ENCODE measurements at regions of chr5 and their contacts with region 1.

Region 1: GRCh38 chr5:140157032-140157803 is 17.8 kb upstream of the CYSTM1 start:
- DNase-seq: peak; percentile 76
- H3K4me3 Mint-ChIP-seq: peak overlapping the region; percentile 41
- H3K27ac Mint-ChIP-seq: no peak overlapping the region
- H3K4me1 Mint-ChIP-seq: no peaks in the 10 kb centered on the region
- H3K27me3 Mint-ChIP-seq: peaks cover 4% of the 10 kb centered on the region

Region 2: DNA sequence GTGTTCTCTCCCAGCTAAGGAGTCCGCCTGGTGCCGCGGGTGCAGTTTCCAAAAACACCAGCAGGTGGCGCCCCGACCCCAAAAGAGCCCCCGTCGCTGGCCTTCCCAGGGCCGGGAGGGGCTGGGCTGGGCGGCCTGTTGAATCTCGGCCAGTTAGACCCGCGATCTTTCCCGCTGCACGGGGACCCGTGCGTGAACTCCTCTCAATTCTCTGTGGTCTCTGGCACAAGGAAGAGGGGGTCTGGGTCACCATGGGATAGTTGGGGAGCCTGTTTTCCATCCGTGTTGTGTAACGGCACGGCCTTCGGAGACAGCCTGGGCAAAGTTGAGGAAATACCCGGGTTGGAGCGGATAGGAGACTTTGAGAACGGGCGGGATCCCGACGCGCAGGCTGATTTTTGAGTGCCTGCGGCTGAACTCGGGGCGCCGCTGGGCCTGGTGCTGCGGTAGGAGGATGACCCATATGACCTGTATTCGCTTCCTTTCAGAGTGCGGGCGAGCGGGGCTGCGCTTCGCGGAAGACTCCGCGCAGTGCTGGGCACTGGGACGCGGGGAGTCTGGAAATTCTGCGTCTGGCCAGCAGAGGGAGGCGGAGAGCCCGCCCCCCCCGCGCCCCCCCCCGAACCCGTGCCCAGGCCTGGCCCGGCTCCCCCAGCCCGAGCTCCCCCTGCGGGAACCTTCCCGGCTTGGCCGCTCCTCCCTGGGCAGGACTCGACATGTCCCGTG is 369.5 kb before region 1 on chr5:
- intact Hi-C with region 1: loop called (anchors 1 kb)
- DNase-seq: peak; percentile 70
- H3K4me3 Mint-ChIP-seq: peak overlapping the region; percentile 82
- H3K27ac Mint-ChIP-seq: no peak overlapping the region
- H3K4me1 Mint-ChIP-seq: no peaks in the 10 kb centered on the region
- H3K27me3 Mint-ChIP-seq: peaks cover 32% of the 10 kb centered on the region

Region 3: DNA sequence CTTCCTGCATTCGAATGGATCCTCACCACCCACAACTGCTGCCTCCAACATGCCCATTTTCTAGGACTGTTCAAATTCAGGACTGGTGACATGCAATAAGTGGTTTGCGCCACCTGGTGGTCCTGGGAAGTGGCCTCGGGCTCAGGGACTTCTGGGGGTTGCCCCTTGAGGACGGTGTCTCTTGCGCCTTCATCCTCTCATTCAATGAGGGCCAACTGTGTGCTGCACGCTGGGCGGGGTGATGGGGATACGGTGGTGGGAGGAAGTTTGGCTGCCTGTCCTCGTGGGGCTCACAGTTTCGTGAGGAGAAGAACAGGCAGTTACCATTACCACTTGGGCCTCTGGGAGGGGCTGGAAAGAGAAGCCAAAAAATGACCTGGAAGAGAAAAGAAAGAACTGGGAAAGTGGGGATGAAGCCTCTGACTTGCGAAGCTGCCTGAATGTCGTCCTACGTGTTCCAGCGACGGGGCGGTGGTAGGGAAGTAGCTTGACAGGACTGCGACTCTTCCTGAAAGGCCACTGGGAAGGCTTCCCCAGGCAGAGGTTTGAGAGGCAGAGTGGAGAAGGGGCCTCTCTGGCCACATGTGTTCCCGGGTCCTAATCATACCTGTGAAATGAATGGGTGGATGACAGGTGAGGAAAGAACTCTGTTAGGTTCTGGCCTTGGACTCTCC is 312.6 kb before region 1 on chr5:
- intact Hi-C with region 1: loop called (anchors 10 kb)
- DNase-seq: peak; percentile 20
- H3K4me3 Mint-ChIP-seq: no peak overlapping the region
- H3K27ac Mint-ChIP-seq: no peak overlapping the region
- H3K4me1 Mint-ChIP-seq: peaks cover 8% of the 10 kb centered on the region
- H3K27me3 Mint-ChIP-seq: peaks cover 44% of the 10 kb centered on the region

Region 4: DNA sequence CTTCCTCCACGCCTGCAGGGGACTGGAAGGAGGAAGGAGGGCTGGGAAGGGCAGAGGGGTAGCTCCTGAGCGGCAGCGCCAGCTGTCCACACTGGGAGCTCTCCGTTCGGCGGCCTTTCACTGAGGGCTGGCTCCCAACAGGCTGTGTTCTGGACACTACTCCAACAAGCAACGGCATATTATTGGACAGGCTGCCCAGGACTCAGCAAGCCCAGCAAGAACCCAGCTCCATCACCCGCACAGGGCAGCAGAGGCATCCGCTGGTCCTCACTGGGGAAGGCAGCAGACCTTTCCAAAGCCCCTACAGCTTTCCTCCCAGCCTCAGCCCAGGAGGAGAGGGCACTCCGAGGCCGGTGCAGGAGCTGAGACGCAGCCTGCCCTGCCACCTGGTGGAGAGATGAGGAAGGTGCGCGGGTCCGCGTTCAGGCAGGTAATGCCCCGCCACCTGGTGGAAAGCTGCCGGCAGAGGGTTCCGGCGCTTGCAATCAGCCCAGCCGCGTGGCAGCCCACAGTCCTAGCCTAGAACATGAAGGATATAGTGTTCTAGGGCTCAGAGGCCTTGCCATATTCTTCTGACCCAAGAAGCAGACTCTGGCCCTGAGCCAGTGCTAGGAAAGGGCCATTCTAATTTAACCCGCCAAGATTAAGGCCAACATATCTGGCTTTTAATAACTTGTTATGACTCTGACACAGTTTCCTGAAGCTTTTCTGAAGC is 188.5 kb before region 1 on chr5:
- intact Hi-C with region 1: loop called (anchors 1 kb)
- DNase-seq: peak; percentile 77
- H3K4me3 Mint-ChIP-seq: no peak overlapping the region
- H3K27ac Mint-ChIP-seq: no peak overlapping the region
- H3K4me1 Mint-ChIP-seq: no peaks in the 10 kb centered on the region
- H3K27me3 Mint-ChIP-seq: peaks cover 29% of the 10 kb centered on the region

Region 5: DNA sequence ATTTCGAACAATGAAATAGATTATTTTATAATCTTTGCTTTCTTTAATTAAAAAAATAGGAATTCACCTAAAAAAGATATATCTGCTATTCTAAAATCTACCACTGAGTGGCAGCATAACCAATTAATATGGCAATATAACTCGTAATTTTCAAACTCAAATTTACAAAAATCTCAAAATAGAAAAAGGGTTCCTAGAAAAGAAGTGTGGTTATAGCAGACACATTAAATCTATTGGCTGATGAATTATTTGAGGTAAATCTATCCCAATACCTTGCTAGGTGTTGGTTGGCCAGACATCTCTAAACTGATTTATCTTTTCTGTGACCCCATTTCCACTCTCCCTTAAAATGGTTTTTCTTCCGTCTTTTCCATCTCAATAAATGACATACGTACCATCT is 83.9 kb before region 1 on chr5:
- intact Hi-C with region 1: loop called (anchors 1 kb)
- DNase-seq: no peak
- H3K4me3 Mint-ChIP-seq: no peak overlapping the region
- H3K27ac Mint-ChIP-seq: no peak overlapping the region
- H3K4me1 Mint-ChIP-seq: no peaks in the 10 kb centered on the region
- H3K27me3 Mint-ChIP-seq: peaks cover 22% of the 10 kb centered on the region

Region 6: DNA sequence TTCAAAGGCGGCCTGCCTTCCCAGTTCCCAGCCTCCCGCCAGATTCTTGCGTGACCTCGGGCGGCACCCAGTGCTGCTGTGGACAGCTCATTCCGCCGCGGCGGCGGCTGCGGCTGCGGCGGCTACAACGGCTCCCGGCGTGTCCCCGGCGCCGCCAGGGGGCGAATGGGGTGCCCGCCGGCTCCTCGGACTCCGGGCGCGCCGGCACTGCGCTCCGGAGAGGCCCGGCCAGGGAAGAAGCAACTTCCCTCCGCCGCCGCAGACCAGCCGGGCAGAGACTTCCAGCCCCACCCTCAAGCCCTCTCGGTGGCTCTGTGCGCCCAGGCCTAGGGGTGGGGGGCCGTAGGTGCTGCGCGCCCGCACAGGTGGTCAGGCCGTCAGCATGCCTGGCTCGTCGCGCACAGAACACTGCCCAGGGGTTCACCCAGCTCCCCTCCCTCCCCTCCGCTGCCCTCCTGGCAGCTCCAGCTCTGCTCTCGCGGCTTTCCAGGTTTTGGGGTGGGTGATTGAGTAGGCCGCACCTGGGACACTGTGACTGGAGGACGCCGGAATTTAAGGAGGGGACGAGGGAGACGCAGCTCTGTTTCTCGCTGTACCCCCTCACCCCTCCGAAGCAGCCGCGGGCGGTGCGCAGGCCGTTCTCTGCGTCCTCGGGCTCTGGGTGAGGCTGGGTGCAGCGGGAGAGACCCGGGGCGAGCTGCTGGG is 11.2 kb before region 1 on chr5:
- intact Hi-C with region 1: loop called (anchors 1 kb)
- DNase-seq: peak; percentile 41
- H3K4me3 Mint-ChIP-seq: no peak overlapping the region
- H3K27ac Mint-ChIP-seq: no peak overlapping the region
- H3K4me1 Mint-ChIP-seq: peaks cover 5% of the 10 kb centered on the region
- H3K27me3 Mint-ChIP-seq: peaks cover 42% of the 10 kb centered on the region